ENCODE measurements at regions of chr12 and their contacts with region 1.

Region 1: GRCh38 chr12:49776413-49776812 is 35.1 kb downstream of the TMBIM6 start:
- DNase-seq: peak; percentile 60 to 76
- H3K4me3 ChIP-seq: no peak overlapping the region
- H3K27ac ChIP-seq: no peak overlapping the region
- H3K4me1 ChIP-seq: peaks cover 0 to 2% (median 0%) of the 10 kb centered on the region in 4 experiments; a peak in 2 of 7 replicates
- H3K27me3 ChIP-seq: no peaks in the 10 kb centered on the region
- CTCF ChIP-seq: peak; percentile 87 to 91 (median 90)
- EP300 ChIP-seq: no peak
- POLR2A ChIP-seq: no peak
- RAD21 ChIP-seq: peak; percentile 90 to 96

Region 2: GRCh38 chr12:49644620-49644994 is 131.8 kb before region 1 on chr12:
- CTCF ChIA-PET with region 1: interaction called, 12 read pairs
- POLR2A ChIA-PET with region 1: no interaction called
- DNase-seq: peak in 1 of 2 experiments; percentile 83
- H3K4me3 ChIP-seq: no peak overlapping the region
- H3K27ac ChIP-seq: no peak overlapping the region
- H3K4me1 ChIP-seq: no peaks in the 10 kb centered on the region
- H3K27me3 ChIP-seq: no peaks in the 10 kb centered on the region
- CTCF ChIP-seq: peak; percentile 87 to 93 (median 89)
- EP300 ChIP-seq: no peak
- POLR2A ChIP-seq: no peak
- RAD21 ChIP-seq: peak; percentile 97

Region 3: GRCh38 chr12:49703647-49704137 is 72.7 kb before region 1 on chr12:
- CTCF ChIA-PET with region 1: no interaction called
- POLR2A ChIA-PET with region 1: no interaction called
- DNase-seq: no peak
- H3K4me3 ChIP-seq: no peak overlapping the region
- H3K27ac ChIP-seq: no peak overlapping the region
- H3K4me1 ChIP-seq: peaks cover 9 to 34% (median 14%) of the 10 kb centered on the region in 4 experiments
- H3K27me3 ChIP-seq: peaks cover 1 to 9% (median 6%) of the 10 kb centered on the region in 4 experiments
- CTCF ChIP-seq: no peak
- EP300 ChIP-seq: no peak
- POLR2A ChIP-seq: no peak
- RAD21 ChIP-seq: no peak

Region 4: GRCh38 chr12:49789992-49790391 is 13.6 kb after region 1 on chr12:
- CTCF ChIA-PET with region 1: interaction called, 54 read pairs
- POLR2A ChIA-PET with region 1: interaction called, 4 read pairs
- DNase-seq: peak in 1 of 2 experiments; percentile 19
- H3K4me3 ChIP-seq: no peak overlapping the region
- H3K27ac ChIP-seq: 0 out of 2 replicates have a peak overlapping the region, but pooled peaks have one; percentile 12
- H3K4me1 ChIP-seq: peaks cover 0 to 4% (median 0%) of the 10 kb centered on the region in 4 experiments; a peak in 2 of 7 replicates
- H3K27me3 ChIP-seq: no peaks in the 10 kb centered on the region
- CTCF ChIP-seq: peak; percentile 7 to 64 (median 37)
- EP300 ChIP-seq: no peak
- POLR2A ChIP-seq: no peak
- RAD21 ChIP-seq: peak in 1 of 2 experiments; percentile 29; a peak in 1 of 4 replicates

Region 5: DNA sequence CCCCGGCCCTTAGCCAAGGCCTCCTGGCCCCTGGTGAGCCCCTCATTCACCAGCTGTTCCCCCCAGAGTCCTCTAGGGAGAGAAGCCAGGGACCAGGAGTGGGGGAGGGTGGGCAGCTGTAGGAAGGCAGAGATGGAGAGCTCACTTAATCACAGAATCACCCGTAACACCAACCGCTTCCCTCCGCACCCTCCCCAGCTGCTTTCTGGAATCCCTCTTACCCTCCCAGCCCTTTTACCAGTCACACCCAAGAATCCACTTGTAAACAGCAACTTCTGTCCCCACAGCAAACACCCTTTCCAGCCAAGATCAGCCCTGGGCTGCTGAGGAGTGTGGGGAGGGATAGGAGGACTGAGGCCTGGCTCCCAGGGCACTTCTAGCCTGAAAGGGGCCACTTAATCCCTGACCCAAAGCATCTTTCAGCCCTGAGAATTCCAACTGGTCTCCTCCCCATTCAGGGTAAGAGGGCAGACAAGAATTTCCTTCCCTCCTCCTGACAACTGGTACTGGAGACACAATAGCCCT is 33.0 kb after region 1 on chr12:
- CTCF ChIA-PET with region 1: interaction called, 25 read pairs
- POLR2A ChIA-PET with region 1: interaction called, 4 read pairs
- DNase-seq: no peak
- H3K4me3 ChIP-seq: peak overlapping the region in 1 of 4 experiments; percentile 13; a peak in 3 of 8 replicates
- H3K27ac ChIP-seq: peak overlapping the region; percentile 62
- H3K4me1 ChIP-seq: peaks cover 16 to 35% (median 22%) of the 10 kb centered on the region in 4 experiments
- H3K27me3 ChIP-seq: no peaks in the 10 kb centered on the region
- CTCF ChIP-seq: no peak
- EP300 ChIP-seq: no peak
- POLR2A ChIP-seq: no peak
- RAD21 ChIP-seq: no peak

Region 6: GRCh38 chr12:49828133-49829091 is 52.0 kb after region 1 on chr12 and contains the start of gene NCKAP5L:
- CTCF ChIA-PET with region 1: interaction called, 30 read pairs
- POLR2A ChIA-PET with region 1: interaction called, 5 read pairs
- DNase-seq: peak; percentile 90 to 96
- H3K4me3 ChIP-seq: peak within 1 kb of the TSS; percentile 77 to 90 (median 84)
- H3K27ac ChIP-seq: peak within 1 kb of the TSS; percentile 78
- H3K4me1 ChIP-seq: peaks cover 3 to 27% (median 18%) of the 10 kb centered on the region in 4 experiments
- H3K27me3 ChIP-seq: no peaks in the 10 kb centered on the region
- CTCF ChIP-seq: no peak
- EP300 ChIP-seq: no peak
- POLR2A ChIP-seq: peak; percentile 69 to 81
- RAD21 ChIP-seq: no peak
- total RNA-seq, gene NCKAP5L: 27.9 and 30.2 TPM in 2 replicates

Region 7: DNA sequence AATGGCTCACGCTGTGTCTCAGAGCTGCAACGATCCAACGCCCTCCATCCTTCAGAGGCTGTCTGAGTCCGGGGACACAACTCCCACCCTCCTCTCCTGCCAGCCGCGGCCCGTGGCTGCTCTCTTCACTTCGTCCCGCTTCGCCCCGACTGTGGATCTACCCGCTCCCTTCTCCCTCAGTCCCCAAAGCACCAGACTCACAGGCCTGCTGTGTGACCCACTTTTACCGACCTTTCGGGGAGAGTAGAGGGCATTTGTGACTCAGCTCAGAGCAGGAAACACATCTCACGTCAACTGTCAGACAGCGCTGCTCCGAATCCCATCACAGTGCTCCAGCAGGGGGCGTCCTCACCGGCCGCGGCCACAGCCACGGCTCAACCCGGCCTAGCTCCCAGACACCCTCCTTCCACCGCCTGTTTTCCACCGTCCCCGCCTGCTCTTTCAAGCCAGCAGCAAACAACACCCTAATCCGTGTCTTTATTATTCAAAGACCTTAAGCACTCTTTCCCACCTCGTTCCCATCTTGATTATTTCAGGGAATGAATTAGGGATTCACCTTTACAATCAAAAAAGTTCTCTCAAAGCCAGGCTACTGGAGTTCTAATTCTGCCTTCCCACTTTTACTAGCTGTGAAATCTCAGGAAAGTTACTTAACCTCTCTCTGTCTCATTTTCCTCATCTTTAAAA is 169.1 kb after region 1 on chr12:
- CTCF ChIA-PET with region 1: interaction called, 11 read pairs
- POLR2A ChIA-PET with region 1: no interaction called
- DNase-seq: peak; percentile 77 to 97
- H3K4me3 ChIP-seq: peak overlapping the region in 2 of 4 experiments; percentile 16 to 44; a peak in 4 of 8 replicates
- H3K27ac ChIP-seq: no peak overlapping the region
- H3K4me1 ChIP-seq: peaks cover 3 to 17% (median 4%) of the 10 kb centered on the region in 4 experiments; a peak in 6 of 7 replicates
- H3K27me3 ChIP-seq: peaks cover 0 to 3% (median 0%) of the 10 kb centered on the region in 4 experiments; a peak in 1 of 7 replicates
- CTCF ChIP-seq: peak; percentile 87 to 95 (median 89)
- EP300 ChIP-seq: no peak
- POLR2A ChIP-seq: no peak
- RAD21 ChIP-seq: peak; percentile 54 to 64